B cell (primary cell): ENCODE measurements at regions of chr11 and their contacts with region 1.

Region 1: GRCh38 chr11:106156290-106156937 is 79.0 kb downstream of the AASDHPPT start:
- DNase-seq: no peak
- ATAC-seq: no peak
- H3K4me3 ChIP-seq: no peak overlapping the region
- H3K4me3 Mint-ChIP-seq: no peak overlapping the region
- H3K27ac ChIP-seq: no peak overlapping the region
- H3K27ac Mint-ChIP-seq: no peak overlapping the region
- H3K4me1 ChIP-seq: no peaks in the 10 kb centered on the region
- H3K4me1 Mint-ChIP-seq: no peaks in the 10 kb centered on the region
- H3K27me3 ChIP-seq: no peaks in the 10 kb centered on the region
- H3K27me3 Mint-ChIP-seq: peaks cover 8% of the 10 kb centered on the region
- CTCF ChIP-seq: no peak

Region 2: GRCh38 chr11:107689317-107690202 is 1533.1 kb after region 1 on chr11:
- CTCF ChIA-PET with region 1: interaction called, 3 read pairs
- POLR2A ChIA-PET with region 1: no interaction called
- intact Hi-C with region 1: loop called (anchors 10 kb)
- DNase-seq: peak; percentile 63
- ATAC-seq: peak; percentile 57
- H3K4me3 ChIP-seq: no peak overlapping the region
- H3K4me3 Mint-ChIP-seq: no peak overlapping the region
- H3K27ac ChIP-seq: no peak overlapping the region
- H3K27ac Mint-ChIP-seq: no peak overlapping the region
- H3K4me1 ChIP-seq: no peaks in the 10 kb centered on the region
- H3K4me1 Mint-ChIP-seq: no peaks in the 10 kb centered on the region
- H3K27me3 ChIP-seq: no peaks in the 10 kb centered on the region
- H3K27me3 Mint-ChIP-seq: peaks cover 21% of the 10 kb centered on the region
- CTCF ChIP-seq: peak; percentile 64